ENCODE measurements at regions of chr2 and their contacts with region 1.

Region 1: GRCh38 chr2:11124503-11125068 is 30.7 kb upstream of the SLC66A3 start:
- DNase-seq: peak; percentile 73
- H3K4me3 ChIP-seq: no peak overlapping the region
- H3K27ac ChIP-seq: no peak overlapping the region
- H3K4me1 ChIP-seq: peaks cover 10% of the 10 kb centered on the region; the same call in 1 of the 2 replicates
- H3K27me3 ChIP-seq: no peaks in the 10 kb centered on the region

Region 2: DNA sequence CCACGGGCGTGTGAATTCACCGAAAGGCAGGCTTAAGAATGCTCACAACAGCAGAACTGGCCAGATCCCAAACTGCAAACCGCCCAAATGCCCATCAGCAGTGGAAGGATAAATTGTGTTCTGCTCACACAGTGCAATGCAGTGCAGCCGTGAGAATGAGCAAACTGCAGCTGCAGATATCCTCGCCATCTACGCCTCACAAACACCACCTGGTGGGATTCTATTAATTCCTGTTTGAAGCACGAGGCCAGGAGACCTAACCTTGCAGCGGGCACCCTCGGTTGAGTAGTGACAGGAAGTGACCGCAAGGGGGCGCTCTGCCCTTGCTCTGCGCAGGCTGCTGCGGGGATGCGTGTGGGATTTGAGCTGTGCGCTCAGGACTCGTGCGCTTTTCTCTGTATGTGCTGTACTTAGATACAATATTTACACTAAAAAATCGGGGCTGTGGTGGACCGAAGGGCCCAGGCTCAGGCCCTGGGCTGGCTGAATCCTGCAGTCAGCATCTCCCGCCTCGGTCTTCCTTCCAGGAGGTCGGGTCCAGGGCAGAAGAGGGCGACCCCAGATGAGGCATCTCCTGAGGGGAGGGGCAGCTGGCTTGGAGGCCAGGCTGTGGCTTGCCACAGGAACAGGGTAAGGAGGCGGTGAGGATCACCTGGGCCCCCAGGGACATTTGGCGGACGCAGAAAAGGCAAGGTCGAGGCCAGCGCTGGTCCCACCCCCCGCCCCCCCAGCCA is 292.2 kb before region 1 on chr2:
- in situ Hi-C with region 1: loop called (anchors 5 kb)
- DNase-seq: peak; percentile 88
- H3K4me3 ChIP-seq: no peak overlapping the region
- H3K27ac ChIP-seq: no peak overlapping the region
- H3K4me1 ChIP-seq: no peaks in the 10 kb centered on the region
- H3K27me3 ChIP-seq: peaks cover 46% of the 10 kb centered on the region

Region 3: GRCh38 chr2:11495844-11496681 is 371.5 kb after region 1 on chr2:
- in situ Hi-C with region 1: no loop called
- DNase-seq: no peak
- H3K4me3 ChIP-seq: no peak overlapping the region
- H3K27ac ChIP-seq: no peak overlapping the region
- H3K4me1 ChIP-seq: no peaks in the 10 kb centered on the region
- H3K27me3 ChIP-seq: no peaks in the 10 kb centered on the region; the same call in 1 of the 2 replicates

Region 4: GRCh38 chr2:11998218-11998617 is 873.6 kb after region 1 on chr2:
- in situ Hi-C with region 1: no loop called
- DNase-seq: peak; percentile 43
- H3K4me3 ChIP-seq: no peak overlapping the region
- H3K27ac ChIP-seq: no peak overlapping the region
- H3K4me1 ChIP-seq: peaks cover 26% of the 10 kb centered on the region
- H3K27me3 ChIP-seq: no peaks in the 10 kb centered on the region

Measured in GM23248 (cell line).